ENCODE measurements at regions of chr10 and their contacts with region 1.

Region 1: GRCh38 chr10:98446661-98447221 is at the start of gene HPS1:
- DNase-seq: peak; percentile 90
- H3K27ac ChIP-seq: peak within 1 kb of the TSS; percentile 81
- CTCF ChIP-seq: no peak

Region 2: GRCh38 chr10:98253499-98253898 is 193.2 kb before region 1 on chr10:
- CTCF ChIA-PET with region 1: no interaction called
- POLR2A ChIA-PET with region 1: no interaction called
- DNase-seq: no peak
- H3K27ac ChIP-seq: no peak overlapping the region
- CTCF ChIP-seq: no peak

Region 3: GRCh38 chr10:98376485-98376884 is 70.3 kb before region 1 on chr10:
- CTCF ChIA-PET with region 1: no interaction called
- POLR2A ChIA-PET with region 1: no interaction called
- DNase-seq: no peak
- H3K27ac ChIP-seq: no peak overlapping the region
- CTCF ChIP-seq: no peak

Region 4: GRCh38 chr10:98391578-98391991 is 55.2 kb before region 1 on chr10:
- CTCF ChIA-PET with region 1: no interaction called
- POLR2A ChIA-PET with region 1: no interaction called
- DNase-seq: no peak
- H3K27ac ChIP-seq: peak overlapping the region; percentile 57
- CTCF ChIP-seq: no peak

Region 5: GRCh38 chr10:98425511-98426352 is 21.0 kb before region 1 on chr10:
- CTCF ChIA-PET with region 1: interaction called, 12 read pairs
- POLR2A ChIA-PET with region 1: interaction called, 4 read pairs
- DNase-seq: peak; percentile 39
- H3K27ac ChIP-seq: peak overlapping the region; percentile 22; the same call in 1 of the 2 replicates
- CTCF ChIP-seq: peak; percentile 36

Region 6: DNA sequence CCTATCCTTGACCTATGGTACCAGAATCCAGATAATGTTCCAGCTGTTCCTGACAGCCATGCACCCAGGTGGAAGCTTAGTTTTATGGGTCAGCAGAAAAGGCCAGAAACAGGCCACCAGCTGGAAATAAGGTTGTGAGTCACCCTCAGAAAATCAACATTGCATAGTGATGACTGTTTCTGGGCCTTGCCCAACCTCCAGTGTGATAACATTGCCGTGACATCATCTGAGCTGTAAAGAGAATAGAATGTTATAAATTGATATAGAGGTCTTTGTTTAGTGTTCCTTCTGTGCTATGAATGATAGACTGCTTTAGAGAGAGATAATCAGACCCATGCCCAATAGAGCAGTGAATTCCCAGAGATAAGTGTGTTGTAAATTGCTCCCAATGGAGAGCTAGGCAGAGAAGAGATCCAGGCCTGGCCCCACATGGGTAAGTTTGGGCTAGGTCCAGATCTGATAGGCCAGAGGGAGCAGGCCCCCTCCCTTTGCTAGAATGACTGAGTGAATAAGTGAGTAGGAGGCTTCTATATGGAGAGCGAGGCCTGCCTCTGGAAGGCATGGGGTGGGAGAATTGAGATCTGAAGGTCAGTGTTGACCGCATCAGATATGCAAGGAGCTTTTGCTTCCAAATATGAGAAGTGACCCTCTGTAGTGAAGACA is 14.2 kb after region 1 on chr10:
- CTCF ChIA-PET with region 1: no interaction called
- POLR2A ChIA-PET with region 1: no interaction called
- DNase-seq: peak; percentile 90
- H3K27ac ChIP-seq: no peak overlapping the region
- CTCF ChIP-seq: no peak